ENCODE measurements at regions of chr21 and their contacts with region 1.

Region 1: DNA sequence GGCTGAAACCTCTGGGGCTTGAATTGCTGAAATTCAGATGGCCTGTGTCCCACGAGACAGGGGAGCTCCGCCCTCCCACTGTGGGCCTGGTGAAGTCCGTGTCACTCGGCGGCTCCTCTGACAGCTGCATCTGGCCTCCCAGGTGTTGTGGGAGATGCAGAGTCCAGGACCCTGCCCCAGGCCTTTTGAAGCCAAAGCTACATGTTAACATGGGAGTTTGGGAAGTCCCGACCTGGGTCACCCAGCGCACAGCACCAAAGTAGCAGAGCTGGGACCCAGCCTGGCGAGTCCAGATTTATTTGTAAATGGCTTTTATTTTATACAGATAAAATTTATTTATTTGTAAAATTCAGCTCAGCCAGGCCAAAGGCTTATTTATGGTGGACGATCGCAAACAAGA is 28.9 kb downstream of the SLC37A1 start:
- DNase-seq: peak in 1 of 5 donors; percentile 14
- H3K4me3 ChIP-seq: no peak overlapping the region
- H3K27ac ChIP-seq: no peak overlapping the region
- H3K4me1 ChIP-seq: no peaks in the 10 kb centered on the region
- H3K27me3 ChIP-seq: no peaks in the 10 kb centered on the region
- CTCF ChIP-seq: no peak
- EP300 ChIP-seq: no peak
- POLR2A ChIP-seq: no peak

Region 2: GRCh38 chr21:42609811-42610210 is 67.2 kb after region 1 on chr21:
- intact Hi-C with region 1: loop called in 1 of 4 experiments (anchors 2 kb)
- DNase-seq: no peak
- H3K4me3 ChIP-seq: no peak overlapping the region
- H3K27ac ChIP-seq: no peak overlapping the region
- H3K4me1 ChIP-seq: no peaks in the 10 kb centered on the region
- H3K27me3 ChIP-seq: no peaks in the 10 kb centered on the region
- CTCF ChIP-seq: no peak
- EP300 ChIP-seq: no peak
- POLR2A ChIP-seq: no peak

Region 3: DNA sequence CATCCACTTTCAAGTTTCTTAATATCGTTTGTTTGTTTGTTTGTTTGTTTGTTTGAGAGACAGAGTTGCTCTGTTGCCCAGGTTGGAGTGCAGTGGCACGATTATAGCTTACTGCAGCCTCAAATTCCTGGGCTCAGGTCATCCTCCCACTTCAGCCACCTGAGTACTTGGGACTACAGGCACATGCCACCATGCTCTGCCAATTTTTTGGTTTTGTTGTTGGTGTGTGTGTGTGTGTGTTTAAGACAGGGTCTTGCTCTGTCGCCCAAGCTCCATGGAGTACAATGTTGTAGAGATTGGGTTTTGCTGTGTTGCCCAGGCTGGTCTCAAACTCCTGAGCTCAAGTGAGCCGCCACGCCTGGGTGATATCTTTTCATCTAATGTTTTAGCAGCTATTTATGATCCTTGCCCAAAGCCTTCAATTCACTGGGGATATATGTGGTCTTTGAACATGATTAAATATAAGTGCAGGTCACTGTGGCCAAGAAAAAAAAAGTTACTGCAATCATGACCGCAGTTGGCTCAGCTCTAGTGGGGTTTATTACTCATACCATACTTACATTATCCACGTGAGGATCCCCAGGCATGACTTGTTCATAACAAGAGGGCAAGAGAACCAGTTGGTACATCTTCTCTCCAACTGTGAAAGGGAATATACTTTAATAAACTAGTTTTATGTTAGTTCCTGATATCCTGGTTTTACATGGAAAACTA is 1124.8 kb after region 1 on chr21:
- intact Hi-C with region 1: no loop called
- DNase-seq: no peak
- H3K4me3 ChIP-seq: no peak overlapping the region
- H3K27ac ChIP-seq: no peak overlapping the region
- H3K4me1 ChIP-seq: no peaks in the 10 kb centered on the region
- H3K27me3 ChIP-seq: no peaks in the 10 kb centered on the region
- CTCF ChIP-seq: no peak
- EP300 ChIP-seq: no peak
- POLR2A ChIP-seq: no peak